Naive thymus-derived CD4-positive, alpha-beta T cell (primary cell): ENCODE measurements at regions of chr16 and their contacts with region 1.

Region 1: GRCh38 chr16:68022704-68023522 is at the starts of genes DDX28 and DUS2:
- DNase-seq: peak; percentile 89 to 98 (median 94)
- ATAC-seq: peak; percentile 98
- H3K4me3 ChIP-seq: peak within 1 kb of the TSS; percentile 67
- H3K4me3 Mint-ChIP-seq: peak within 1 kb of the TSS; percentile 88 to 100 (median 98)
- H3K27ac ChIP-seq: peak within 1 kb of the TSS; percentile 92
- H3K27ac Mint-ChIP-seq: peak within 1 kb of the TSS; percentile 94 to 100 (median 96)
- H3K4me1 ChIP-seq: peaks cover 16 to 22% of the 10 kb centered on the region in 2 donors
- H3K4me1 Mint-ChIP-seq: peaks cover 13 to 42% (median 30%) of the 10 kb centered on the region in 7 donors
- H3K27me3 ChIP-seq: no peaks in the 10 kb centered on the region
- H3K27me3 Mint-ChIP-seq: peaks cover 0 to 2% (median 0%) of the 10 kb centered on the region in 5 donors
- total RNA-seq, gene DDX28: 15.5 to 19.9 (median 19.1) TPM
- total RNA-seq, gene DUS2: 13.6 to 25.9 (median 18.3) TPM

Region 2: DNA sequence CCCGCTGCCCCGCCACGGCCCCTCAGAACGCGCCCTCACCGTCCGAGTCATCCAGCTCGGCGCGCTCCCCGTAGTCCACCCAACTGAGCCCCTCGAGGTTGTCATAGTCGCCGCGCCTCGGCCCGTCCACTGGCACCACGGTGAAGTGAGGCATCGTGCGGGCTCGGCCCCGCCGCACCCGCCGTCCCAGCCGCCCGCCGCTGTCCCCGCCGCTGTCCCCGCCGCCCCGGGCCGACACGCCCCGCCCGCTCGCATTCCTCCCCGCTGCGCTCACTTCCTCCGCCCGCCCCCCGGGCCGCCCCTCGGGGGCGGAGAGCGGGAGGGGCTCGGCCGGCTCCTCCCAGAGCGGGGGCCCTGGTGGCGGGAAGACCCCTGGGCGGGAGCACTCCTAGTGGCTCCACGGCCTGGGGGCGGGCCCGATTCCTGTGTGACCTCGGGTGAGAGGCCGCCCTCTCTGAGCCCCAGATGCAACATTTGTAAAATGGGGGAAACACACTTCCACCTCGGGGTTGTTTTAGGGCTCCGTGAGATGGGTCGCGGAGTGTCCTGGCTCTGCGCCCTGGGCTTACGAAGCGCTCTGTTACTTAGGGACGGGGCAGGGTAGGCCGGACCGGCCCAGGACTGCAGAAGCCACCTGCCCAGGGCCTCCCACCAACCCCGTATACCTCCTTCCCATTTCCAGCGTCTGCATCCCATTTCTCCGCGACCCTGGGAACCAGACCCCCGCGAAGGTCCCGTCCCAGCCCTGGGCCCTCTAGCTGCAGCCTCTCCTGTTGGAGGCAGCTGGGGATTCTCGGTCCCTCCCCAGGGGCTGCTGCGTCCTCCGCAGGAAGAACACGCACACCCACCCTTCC is 54.3 kb before region 1 on chr16 and contains the start of gene SLC12A4:
- CTCF ChIA-PET with region 1: no interaction called
- POLR2A ChIA-PET with region 1: no interaction called
- intact Hi-C with region 1: loop called in 1 of 2 experiments (anchors 2 kb)
- DNase-seq: peak; percentile 74 to 96 (median 81)
- ATAC-seq: peak; percentile 97
- H3K4me3 ChIP-seq: peak within 1 kb of the TSS; percentile 88
- H3K4me3 Mint-ChIP-seq: peak within 1 kb of the TSS; percentile 86 to 100 (median 97)
- H3K27ac ChIP-seq: peak within 1 kb of the TSS; percentile 81
- H3K27ac Mint-ChIP-seq: peak within 1 kb of the TSS; percentile 89 to 95 (median 93)
- H3K4me1 ChIP-seq: peaks cover 10 to 14% of the 10 kb centered on the region in 2 donors
- H3K4me1 Mint-ChIP-seq: peaks cover 20 to 42% (median 29%) of the 10 kb centered on the region in 7 donors
- H3K27me3 ChIP-seq: no peaks in the 10 kb centered on the region
- H3K27me3 Mint-ChIP-seq: no peaks in the 10 kb centered on the region
- total RNA-seq, gene SLC12A4: 22.8 to 44.4 (median 31.3) TPM

Region 3: DNA sequence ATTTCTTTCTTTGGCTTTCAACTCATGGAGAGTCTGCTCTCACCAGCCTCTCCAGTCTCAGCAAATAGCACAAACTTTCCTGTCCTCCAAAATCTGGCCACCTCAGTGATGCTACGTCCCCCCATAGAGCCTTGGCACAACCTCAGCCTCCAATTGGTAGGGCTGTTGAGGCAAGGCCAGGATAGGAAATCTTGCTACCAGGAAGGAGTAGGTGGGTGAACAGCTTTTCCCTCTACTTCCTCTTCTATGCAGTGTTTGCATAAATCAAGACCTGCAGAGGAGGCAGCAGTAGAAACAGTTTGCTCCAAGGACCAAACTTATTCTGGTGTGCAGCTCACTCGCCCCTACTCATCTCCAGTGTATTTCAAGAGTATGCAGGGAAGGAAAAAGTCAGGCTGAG is 22.9 kb before region 1 on chr16:
- CTCF ChIA-PET with region 1: interaction called, 10 read pairs
- POLR2A ChIA-PET with region 1: interaction called, 422 read pairs
- intact Hi-C with region 1: loop called in 1 of 2 experiments (anchors 1 kb)
- DNase-seq: peak in 2 of 9 donors; percentile 27 to 39
- ATAC-seq: peak; percentile 34
- H3K4me3 ChIP-seq: peak overlapping the region; percentile 75
- H3K4me3 Mint-ChIP-seq: peak overlapping the region; percentile 80 to 94 (median 90)
- H3K27ac ChIP-seq: peak overlapping the region; percentile 64
- H3K27ac Mint-ChIP-seq: peak overlapping the region; percentile 84 to 99 (median 95)
- H3K4me1 ChIP-seq: peaks cover 29 to 47% of the 10 kb centered on the region in 2 donors
- H3K4me1 Mint-ChIP-seq: peaks cover 28 to 86% (median 57%) of the 10 kb centered on the region in 7 donors
- H3K27me3 ChIP-seq: no peaks in the 10 kb centered on the region
- H3K27me3 Mint-ChIP-seq: no peaks in the 10 kb centered on the region

Region 4: GRCh38 chr16:68005786-68006286 is 17.1 kb before region 1 on chr16:
- CTCF ChIA-PET with region 1: interaction called, 5 read pairs
- POLR2A ChIA-PET with region 1: interaction called, 422 read pairs
- intact Hi-C with region 1: loop called in 1 of 2 experiments (anchors 1 kb)
- DNase-seq: peak in 7 of 9 donors; percentile 37 to 87 (median 77)
- ATAC-seq: peak; percentile 99
- H3K4me3 ChIP-seq: peak overlapping the region; percentile 23
- H3K4me3 Mint-ChIP-seq: peak overlapping the region; percentile 40 to 85 (median 60)
- H3K27ac ChIP-seq: peak overlapping the region; percentile 50
- H3K27ac Mint-ChIP-seq: peak overlapping the region; percentile 91 to 100 (median 97)
- H3K4me1 ChIP-seq: peaks cover 28 to 45% of the 10 kb centered on the region in 2 donors
- H3K4me1 Mint-ChIP-seq: peaks cover 18 to 68% (median 44%) of the 10 kb centered on the region in 7 donors
- H3K27me3 ChIP-seq: no peaks in the 10 kb centered on the region
- H3K27me3 Mint-ChIP-seq: peaks cover 0 to 2% (median 0%) of the 10 kb centered on the region in 5 donors

Region 5: DNA sequence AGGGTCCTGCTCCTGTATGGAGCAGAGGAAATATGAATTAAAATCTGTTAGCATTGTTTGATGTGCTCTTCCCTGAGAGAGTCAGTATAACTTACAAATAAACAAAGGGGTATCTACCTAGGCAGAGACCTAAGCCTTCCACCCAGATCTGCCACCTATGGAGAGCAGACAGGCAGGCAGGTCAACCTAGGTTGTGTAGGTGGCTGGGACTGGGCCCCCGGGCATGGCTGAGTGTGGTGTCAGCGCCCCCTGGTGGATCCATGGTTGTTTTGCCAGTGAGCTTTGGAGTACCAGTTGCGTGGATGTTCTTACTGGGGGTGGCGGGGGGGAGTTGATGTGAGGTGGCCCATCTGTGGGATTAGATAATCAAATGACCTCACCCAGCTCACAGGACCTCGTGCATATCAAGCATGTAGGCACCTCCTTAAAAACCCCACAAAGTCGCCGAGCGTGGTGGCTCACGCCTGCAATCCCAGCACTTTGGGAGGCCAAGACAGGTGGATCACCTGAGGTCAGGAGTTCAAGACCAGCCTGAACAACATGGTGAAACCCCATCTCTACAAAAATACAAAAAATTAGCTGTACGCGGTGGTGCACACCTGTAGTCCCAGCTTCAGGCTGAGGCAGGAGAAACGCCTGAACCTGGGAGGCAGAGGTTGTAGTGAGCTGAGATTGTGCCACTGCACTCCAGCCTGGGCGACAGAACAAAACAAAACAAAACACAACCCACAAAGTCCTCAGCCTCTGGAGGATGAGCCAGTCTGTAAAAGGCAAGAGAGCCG is 17.8 kb after region 1 on chr16:
- CTCF ChIA-PET with region 1: interaction called, 3 read pairs
- POLR2A ChIA-PET with region 1: interaction called, 4 read pairs
- intact Hi-C with region 1: loop called in 1 of 2 experiments (anchors 1 kb)
- DNase-seq: peak; percentile 81 to 95 (median 87)
- ATAC-seq: peak; percentile 100
- H3K4me3 ChIP-seq: no peak overlapping the region
- H3K4me3 Mint-ChIP-seq: peak overlapping the region in 1 of 10 donors; percentile 9
- H3K27ac ChIP-seq: peak overlapping the region; percentile 26
- H3K27ac Mint-ChIP-seq: peak overlapping the region; percentile 28 to 87 (median 61)
- H3K4me1 ChIP-seq: peaks cover 4 to 5% of the 10 kb centered on the region in 2 donors
- H3K4me1 Mint-ChIP-seq: peaks cover 5 to 26% (median 18%) of the 10 kb centered on the region in 7 donors
- H3K27me3 ChIP-seq: no peaks in the 10 kb centered on the region
- H3K27me3 Mint-ChIP-seq: no peaks in the 10 kb centered on the region